ENCODE measurements at regions of chr7 and their contacts with region 1.

Region 1: DNA sequence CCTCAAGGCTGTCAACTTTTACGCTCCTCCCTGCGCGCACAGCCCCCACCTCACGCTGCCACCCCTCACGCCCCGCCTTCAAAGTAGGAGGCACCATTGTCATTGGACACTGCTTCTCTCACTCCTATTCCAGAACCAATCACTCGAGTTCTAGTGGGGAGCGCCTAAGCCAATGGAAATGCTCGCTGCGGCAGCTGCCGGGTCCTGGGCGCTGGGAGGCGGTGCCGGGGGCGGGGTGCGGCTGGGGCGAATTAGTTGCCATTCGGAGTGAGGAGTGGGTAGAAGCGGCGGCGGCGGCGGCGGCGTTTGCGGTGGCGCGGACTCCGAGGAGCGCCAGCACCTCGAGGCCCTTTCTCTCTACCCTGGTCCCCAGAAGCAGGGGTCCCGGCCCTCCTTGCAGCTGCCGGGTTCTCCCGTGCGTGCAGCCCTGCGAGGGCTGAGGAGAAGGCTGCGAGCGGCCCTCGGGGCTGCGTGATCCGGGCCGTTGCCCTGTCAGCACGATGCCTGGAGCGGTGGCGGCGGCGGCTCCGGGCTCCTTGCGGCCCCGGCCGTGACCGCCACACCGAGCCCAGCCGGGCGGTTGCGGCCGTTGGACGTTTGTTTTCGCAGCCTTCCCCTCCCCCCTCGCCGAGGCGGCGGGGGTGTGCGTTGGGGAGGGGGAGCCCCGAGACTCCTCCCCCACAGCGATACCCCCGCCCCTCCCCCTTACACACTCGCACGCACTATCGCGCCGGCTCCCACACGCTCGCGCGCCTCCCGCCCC is at the start of gene GLCCI1:
- DNase-seq: peak; percentile 98
- H3K4me3 ChIP-seq: peak within 1 kb of the TSS; percentile 72
- H3K27ac ChIP-seq: peak within 1 kb of the TSS; percentile 92
- H3K4me1 ChIP-seq: peaks cover 50% of the 10 kb centered on the region
- CTCF ChIP-seq: no peak
- total RNA-seq, gene GLCCI1: 18.5 and 21.3 TPM in 2 replicates

Region 2: DNA sequence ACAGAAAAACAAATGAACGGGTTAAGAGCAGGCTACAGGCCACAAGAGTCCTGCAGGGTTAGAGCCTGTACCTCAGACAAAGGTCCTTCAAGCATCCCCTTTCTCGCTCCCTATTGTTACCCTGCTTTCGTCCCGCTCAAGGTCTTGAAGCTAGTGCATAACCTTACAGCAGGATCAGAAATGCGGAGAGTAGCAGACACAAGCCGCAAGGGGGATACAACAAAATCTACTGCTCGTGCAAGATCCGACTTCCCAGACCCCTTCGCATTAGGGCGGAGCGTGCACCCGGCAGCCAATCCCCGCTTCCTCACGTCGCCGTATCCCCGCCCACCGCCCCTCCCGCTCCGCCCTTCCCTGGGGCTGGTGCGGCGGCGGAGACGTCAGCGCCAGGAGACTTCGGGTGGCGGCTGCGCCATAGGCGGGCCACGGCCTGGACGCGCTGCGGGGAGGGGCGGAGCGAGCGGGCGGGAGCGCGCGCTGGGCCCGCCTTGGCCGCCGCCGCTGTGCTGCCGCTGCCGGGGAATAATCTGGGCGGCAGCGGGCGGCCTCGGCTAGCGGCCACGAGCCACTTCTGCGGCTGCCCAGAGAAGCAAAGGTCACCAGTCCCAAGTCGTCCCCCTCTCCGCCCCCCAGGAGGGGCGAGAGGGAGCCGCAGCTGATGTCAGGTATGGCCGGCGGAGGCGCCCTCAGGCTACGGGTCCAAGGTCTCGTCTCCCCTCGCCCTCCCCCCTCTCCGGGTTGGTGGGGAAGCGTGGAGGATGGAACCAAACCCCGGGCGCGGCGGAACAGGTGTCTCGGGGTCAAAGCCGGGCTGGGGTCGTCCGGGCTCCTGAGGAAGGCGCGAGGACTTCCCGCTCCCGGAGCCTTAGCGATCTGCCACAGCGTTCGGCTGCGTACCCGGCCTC is 786.3 kb before region 1 on chr7 and contains the start of gene C1GALT1:
- CTCF ChIA-PET with region 1: no interaction called
- POLR2A ChIA-PET with region 1: no interaction called
- intact Hi-C with region 1: loop called (anchors 5 kb)
- DNase-seq: peak; percentile 97
- H3K4me3 ChIP-seq: peak within 1 kb of the TSS; percentile 85
- H3K27ac ChIP-seq: peak within 1 kb of the TSS; percentile 94
- H3K4me1 ChIP-seq: peaks cover 26% of the 10 kb centered on the region
- CTCF ChIP-seq: peak; percentile 66
- total RNA-seq, gene C1GALT1: 18.9 and 28.9 TPM in 2 replicates

Region 3: GRCh38 chr7:7640221-7641128 is 328.2 kb before region 1 on chr7 and contains the start of gene UMAD1:
- CTCF ChIA-PET with region 1: no interaction called
- POLR2A ChIA-PET with region 1: interaction called, 5 read pairs
- intact Hi-C with region 1: loop called (anchors 2 kb)
- DNase-seq: peak; percentile 99
- H3K4me3 ChIP-seq: peak within 1 kb of the TSS; percentile 92
- H3K27ac ChIP-seq: peak within 1 kb of the TSS; percentile 72
- H3K4me1 ChIP-seq: peaks cover 28% of the 10 kb centered on the region
- CTCF ChIP-seq: no peak
- total RNA-seq, gene UMAD1: 8.7 and 14.2 TPM in 2 replicates

Region 4: DNA sequence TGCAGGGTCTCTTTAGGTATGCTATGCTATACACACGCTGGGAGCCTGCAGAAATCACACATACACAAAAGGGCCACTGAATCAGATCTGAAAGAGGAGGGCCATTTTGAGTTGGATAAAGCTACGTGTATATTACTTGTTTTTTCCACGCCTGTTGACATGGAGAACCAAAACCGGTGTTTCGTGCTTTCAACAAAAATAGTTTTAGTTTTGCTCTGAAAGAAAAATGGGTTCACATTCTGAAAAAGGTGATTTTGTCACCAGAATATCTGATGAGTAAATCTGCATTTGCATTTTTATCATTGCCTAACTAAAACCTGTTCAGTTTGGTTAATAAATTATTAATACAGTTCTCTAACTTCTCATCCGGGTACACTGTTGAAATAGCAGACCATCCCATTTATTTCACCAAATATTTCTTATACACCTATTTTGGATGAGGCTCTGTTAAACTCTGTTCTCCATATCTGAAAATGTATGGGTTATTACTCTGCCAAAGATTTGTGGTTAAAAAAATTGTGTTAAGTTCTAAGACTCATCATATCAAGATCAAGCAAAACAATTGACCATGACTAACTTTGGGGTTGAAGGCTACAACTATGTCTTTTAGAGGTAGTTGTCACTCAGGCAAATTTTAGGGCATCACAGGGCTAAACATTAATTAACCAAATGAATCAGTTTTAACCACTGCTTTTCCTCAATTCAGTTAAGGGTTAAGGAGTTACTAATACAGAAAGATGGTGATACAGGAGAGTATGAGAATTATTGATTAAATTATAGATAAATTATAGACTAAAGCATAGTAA is 149.1 kb before region 1 on chr7:
- CTCF ChIA-PET with region 1: no interaction called
- POLR2A ChIA-PET with region 1: interaction called, 3 read pairs
- intact Hi-C with region 1: loop called (anchors 2 kb)
- DNase-seq: no peak
- H3K4me3 ChIP-seq: no peak overlapping the region
- H3K27ac ChIP-seq: no peak overlapping the region
- H3K4me1 ChIP-seq: peaks cover 28% of the 10 kb centered on the region
- CTCF ChIP-seq: no peak

Region 5: DNA sequence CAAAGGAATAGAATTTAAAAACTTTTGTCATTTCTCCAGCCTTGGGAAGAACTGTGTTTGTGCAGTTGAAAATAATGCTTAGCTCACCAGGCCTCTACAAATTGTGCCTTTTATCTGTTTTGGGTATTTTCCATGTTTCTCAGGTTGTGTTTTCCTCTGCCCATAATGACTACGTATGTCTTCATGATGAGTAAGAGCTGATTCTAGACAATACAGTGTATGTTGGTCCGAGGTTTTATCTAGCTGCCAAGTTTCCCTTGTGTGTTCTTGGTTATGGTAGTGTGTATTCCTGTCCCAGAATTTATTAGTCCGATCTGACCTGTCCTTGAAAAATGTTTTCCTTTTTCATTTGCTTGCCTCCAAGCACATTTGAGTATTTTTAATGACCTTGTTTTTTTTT is 83.9 kb before region 1 on chr7:
- CTCF ChIA-PET with region 1: no interaction called
- POLR2A ChIA-PET with region 1: no interaction called
- intact Hi-C with region 1: no loop called
- DNase-seq: no peak
- H3K4me3 ChIP-seq: no peak overlapping the region
- H3K27ac ChIP-seq: no peak overlapping the region
- H3K4me1 ChIP-seq: peaks cover 6% of the 10 kb centered on the region
- CTCF ChIP-seq: no peak

Region 6: GRCh38 chr7:7956531-7957128 is 12.1 kb before region 1 on chr7:
- CTCF ChIA-PET with region 1: interaction called, 4 read pairs
- POLR2A ChIA-PET with region 1: interaction called, 64 read pairs
- intact Hi-C with region 1: no loop called
- DNase-seq: no peak
- H3K4me3 ChIP-seq: no peak overlapping the region
- H3K27ac ChIP-seq: no peak overlapping the region
- H3K4me1 ChIP-seq: peaks cover 14% of the 10 kb centered on the region
- CTCF ChIP-seq: no peak

Region 7: DNA sequence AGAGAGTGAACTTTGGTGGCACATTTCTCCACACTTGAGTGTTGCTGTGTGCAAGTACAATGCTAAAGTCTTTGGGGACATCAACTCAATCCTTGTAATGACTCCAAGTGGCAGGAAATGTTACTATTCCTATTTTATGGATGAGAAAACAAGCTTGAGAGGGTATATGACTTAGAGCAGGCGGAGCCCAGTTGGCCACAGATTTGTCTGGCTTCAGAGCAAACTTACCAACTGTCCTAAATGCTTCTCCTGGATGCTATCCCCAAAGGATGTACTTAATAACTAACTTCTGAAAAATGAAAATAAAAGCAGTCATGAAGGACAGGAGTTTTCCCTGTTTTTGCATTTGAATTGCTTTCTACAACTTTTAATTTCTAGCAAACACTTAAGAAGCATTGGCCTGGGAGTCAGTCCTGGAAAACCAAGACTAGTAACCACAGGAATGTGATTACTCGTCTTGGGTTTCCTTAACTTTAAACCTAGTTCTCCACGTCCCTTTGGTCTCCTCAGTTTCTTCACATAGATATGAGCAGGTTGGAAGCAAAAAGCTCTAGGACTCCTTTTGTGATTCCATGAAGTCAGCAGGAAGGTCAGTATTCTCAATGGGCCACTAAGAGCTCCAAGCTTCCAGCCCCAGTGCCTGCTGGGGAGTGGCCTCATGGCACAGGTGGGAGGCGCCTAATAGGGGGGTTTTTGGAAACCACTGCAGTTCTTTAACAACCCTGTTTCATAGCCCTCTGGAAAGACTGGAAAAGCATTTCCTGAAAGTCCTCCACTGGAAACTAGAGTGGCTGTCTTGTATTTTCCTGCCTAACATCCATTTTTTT is 140.7 kb after region 1 on chr7:
- CTCF ChIA-PET with region 1: no interaction called
- POLR2A ChIA-PET with region 1: no interaction called
- intact Hi-C with region 1: no loop called
- DNase-seq: no peak
- H3K4me3 ChIP-seq: no peak overlapping the region
- H3K27ac ChIP-seq: no peak overlapping the region
- H3K4me1 ChIP-seq: peaks cover 6% of the 10 kb centered on the region
- CTCF ChIP-seq: no peak

Region 8: DNA sequence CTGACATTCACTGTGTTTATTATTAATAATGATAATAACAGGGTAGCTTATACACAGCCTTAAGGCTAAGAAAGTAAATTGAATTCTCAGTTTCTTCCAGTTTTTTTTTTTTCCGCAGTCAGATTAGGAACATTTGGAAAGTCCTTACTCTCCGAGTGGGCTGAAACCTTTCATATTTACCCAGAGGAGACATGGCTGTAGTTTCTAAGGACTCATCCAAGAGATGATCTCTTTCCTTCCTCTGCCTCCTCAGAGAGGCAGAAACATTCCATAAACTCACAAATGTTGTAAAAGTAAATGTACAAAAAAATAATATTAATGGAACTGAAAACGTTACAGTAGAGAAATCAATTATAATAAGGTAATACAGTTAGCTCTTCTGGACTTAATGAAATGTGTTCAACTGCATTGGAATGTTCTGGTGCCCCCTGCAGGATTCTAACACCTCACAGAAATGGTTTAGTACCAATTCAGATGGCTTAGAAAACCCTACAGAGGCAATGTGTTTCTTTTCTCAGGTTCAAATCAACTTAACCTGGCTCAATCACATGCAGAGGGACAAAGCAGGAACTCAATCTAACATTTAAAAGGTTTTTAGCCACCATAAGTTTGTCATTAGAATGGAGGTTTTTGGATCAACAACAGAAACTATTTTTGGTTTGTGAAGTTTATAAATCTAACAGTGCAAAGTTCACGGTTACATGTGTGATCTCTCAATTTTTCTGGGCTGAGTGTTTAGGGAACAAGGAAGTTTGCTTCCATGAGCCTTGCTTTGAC is 221.6 kb after region 1 on chr7:
- CTCF ChIA-PET with region 1: no interaction called
- POLR2A ChIA-PET with region 1: no interaction called
- intact Hi-C with region 1: loop called (anchors 5 kb)
- DNase-seq: peak; percentile 74
- H3K4me3 ChIP-seq: no peak overlapping the region
- H3K27ac ChIP-seq: no peak overlapping the region
- H3K4me1 ChIP-seq: no peaks in the 10 kb centered on the region
- CTCF ChIP-seq: peak; percentile 94